Gastrocnemius medialis (tissue), 4 donors: ENCODE measurements at regions of chr3 and their contacts with region 1.

Region 1: GRCh38 chr3:126982471-126983175 is at the start of gene PLXNA1:
- DNase-seq: peak; percentile 18 to 60
- ATAC-seq: peak; percentile 87 to 89
- H3K4me3 ChIP-seq: peak within 1 kb of the TSS; percentile 61 to 75 (median 65)
- H3K27ac ChIP-seq: peak within 1 kb of the TSS; percentile 63 to 72 (median 66)
- H3K4me1 ChIP-seq: peaks cover 3 to 23% of the 10 kb centered on the region in 2 donors
- H3K27me3 ChIP-seq: no peaks in the 10 kb centered on the region
- CTCF ChIP-seq: peak; percentile 74 to 94 (median 87)
- POLR2A ChIP-seq: no peak
- total RNA-seq, gene PLXNA1: 12.7 to 27.9 (median 19.5) TPM

Region 2: DNA sequence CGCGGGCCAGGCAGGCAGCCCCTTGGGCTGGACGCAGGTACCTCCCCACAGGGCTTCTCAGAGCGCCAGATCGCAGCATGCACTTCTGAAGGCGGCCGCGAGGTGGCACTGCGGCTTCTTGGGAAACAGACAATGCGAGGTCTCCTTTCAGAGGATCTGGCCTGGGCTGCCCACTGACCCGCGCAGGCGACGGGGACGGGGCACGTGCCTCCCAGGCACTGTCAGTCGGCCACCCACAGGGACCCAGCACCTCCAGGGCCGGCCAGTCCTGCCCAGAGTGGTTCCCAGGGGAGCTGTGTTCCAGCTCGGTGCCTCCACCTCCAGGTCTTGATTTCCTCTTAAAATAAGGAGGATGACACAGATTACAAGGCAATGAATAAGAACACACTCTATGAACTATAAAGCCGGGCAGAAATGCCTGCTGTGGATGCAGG is 303.3 kb before region 1 on chr3:
- in situ Hi-C with region 1: no loop called
- intact Hi-C with region 1: loop called (anchors 1 kb)
- DNase-seq: peak; percentile 53 to 72
- ATAC-seq: peak; percentile 76 to 92
- H3K4me3 ChIP-seq: no peak overlapping the region
- H3K27ac ChIP-seq: no peak overlapping the region
- H3K4me1 ChIP-seq: no peaks in the 10 kb centered on the region
- H3K27me3 ChIP-seq: no peaks in the 10 kb centered on the region
- CTCF ChIP-seq: peak; percentile 88 to 98 (median 92)
- POLR2A ChIP-seq: no peak

Region 3: DNA sequence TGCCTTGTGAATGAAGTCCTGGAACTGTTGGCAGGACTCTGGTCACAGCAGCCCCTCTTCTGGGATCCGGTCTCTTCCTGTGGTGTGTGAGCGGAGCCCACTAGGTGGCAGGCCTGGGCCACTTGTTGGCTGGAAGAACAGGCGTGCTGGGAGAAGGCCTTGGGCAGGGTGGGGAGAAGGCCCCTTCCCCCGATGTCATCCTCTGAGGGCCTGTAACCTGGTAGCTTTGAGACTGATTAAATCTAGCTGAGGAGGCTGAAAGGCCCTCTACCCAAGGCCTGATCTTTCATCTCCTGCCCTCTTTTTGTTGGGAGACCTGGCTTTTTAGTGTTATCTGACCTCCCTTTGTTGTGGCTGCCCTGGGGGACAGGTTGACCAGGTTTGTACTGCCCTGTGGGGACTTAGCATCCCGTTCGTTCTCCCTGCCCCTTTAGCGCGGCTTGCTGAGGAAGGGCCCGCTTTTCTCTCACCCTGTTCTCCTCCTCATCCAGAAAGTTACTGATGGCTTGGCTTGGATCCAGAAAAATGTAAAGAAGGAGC is 230.2 kb before region 1 on chr3:
- in situ Hi-C with region 1: loop called in 3 of 4 experiments (anchors 5 to 10 kb)
- intact Hi-C with region 1: loop called (anchors 1 kb)
- DNase-seq: peak; percentile 46 to 66
- ATAC-seq: peak; percentile 75 to 82
- H3K4me3 ChIP-seq: no peak overlapping the region
- H3K27ac ChIP-seq: no peak overlapping the region
- H3K4me1 ChIP-seq: no peaks in the 10 kb centered on the region
- H3K27me3 ChIP-seq: no peaks in the 10 kb centered on the region
- CTCF ChIP-seq: peak; percentile 77 to 89 (median 84)
- POLR2A ChIP-seq: no peak

Region 4: DNA sequence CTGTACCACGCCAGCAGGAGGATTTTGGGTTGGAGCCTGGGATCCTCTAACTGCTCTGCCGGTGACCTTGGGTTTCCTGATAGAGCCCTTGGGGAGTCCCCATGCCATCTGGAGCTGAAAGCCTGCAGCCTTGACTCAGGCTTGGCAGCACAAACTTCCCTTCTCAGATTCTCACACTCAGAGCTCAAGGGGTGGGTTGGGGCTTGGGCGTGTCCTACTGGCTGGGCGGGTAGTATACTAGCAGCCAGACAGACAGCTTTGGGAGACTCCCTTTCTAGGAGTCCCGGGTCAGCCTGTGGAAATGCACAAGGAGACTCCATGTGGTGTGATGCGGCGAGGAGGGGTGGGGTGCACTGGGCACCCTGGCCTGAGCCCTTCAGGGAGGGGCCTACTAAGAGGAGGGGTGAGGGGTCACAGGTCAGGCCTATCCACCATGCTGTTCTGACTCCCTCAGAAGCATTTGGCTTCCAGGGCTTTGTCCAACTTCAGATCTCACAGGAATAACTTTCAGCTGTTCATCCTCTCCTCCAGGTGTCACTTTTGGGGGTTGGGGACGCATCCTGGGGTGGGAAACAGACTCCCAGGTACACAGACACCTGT is 21.3 kb before region 1 on chr3:
- in situ Hi-C with region 1: no loop called
- intact Hi-C with region 1: loop called (anchors 2 kb)
- DNase-seq: peak; percentile 73 to 95
- ATAC-seq: peak; percentile 86 to 87
- H3K4me3 ChIP-seq: no peak overlapping the region
- H3K27ac ChIP-seq: peak overlapping the region; percentile 79 to 88 (median 82)
- H3K4me1 ChIP-seq: peaks cover 50 to 55% of the 10 kb centered on the region in 2 donors
- H3K27me3 ChIP-seq: no peaks in the 10 kb centered on the region
- CTCF ChIP-seq: no peak
- POLR2A ChIP-seq: no peak

Region 5: DNA sequence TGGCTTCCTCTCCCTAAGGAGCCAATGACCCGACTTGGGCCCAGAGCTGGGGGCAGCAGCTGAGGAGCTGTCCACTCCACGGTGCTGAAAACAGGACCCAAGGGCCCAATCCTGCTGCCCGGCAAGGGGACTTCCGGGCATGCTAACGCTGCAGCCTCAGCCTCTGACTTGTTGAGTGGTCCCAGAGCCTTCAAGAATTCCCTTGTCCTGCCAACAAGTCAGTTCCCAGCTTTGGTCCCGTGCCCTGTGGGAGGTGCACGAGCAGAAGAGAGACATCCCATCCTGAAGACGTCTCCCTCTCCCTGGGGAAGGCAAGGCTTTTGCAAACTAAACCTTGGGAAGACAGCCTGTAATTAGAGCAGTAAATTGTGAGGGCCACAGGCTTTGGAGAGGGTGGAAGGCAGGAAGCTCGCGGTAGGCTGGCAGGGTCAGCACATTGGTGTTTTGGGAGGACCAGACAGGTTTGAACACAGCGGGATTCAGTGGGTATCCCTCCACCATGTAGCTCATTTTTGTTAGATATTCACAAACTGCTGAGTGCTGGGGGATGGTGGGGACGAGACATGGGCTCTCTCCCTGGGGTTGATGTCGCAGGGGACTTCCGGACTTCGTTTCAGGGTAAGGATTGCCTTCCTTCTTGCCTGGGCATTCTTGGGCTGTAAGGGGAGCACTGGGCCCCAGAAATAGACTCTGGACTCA is 180.5 kb after region 1 on chr3:
- in situ Hi-C with region 1: no loop called
- intact Hi-C with region 1: loop called (anchors 10 kb)
- DNase-seq: no peak
- ATAC-seq: no peak
- H3K4me3 ChIP-seq: no peak overlapping the region
- H3K27ac ChIP-seq: no peak overlapping the region
- H3K4me1 ChIP-seq: peaks cover 0 to 2% of the 10 kb centered on the region in 2 donors
- H3K27me3 ChIP-seq: no peaks in the 10 kb centered on the region
- CTCF ChIP-seq: no peak
- POLR2A ChIP-seq: no peak

Region 6: DNA sequence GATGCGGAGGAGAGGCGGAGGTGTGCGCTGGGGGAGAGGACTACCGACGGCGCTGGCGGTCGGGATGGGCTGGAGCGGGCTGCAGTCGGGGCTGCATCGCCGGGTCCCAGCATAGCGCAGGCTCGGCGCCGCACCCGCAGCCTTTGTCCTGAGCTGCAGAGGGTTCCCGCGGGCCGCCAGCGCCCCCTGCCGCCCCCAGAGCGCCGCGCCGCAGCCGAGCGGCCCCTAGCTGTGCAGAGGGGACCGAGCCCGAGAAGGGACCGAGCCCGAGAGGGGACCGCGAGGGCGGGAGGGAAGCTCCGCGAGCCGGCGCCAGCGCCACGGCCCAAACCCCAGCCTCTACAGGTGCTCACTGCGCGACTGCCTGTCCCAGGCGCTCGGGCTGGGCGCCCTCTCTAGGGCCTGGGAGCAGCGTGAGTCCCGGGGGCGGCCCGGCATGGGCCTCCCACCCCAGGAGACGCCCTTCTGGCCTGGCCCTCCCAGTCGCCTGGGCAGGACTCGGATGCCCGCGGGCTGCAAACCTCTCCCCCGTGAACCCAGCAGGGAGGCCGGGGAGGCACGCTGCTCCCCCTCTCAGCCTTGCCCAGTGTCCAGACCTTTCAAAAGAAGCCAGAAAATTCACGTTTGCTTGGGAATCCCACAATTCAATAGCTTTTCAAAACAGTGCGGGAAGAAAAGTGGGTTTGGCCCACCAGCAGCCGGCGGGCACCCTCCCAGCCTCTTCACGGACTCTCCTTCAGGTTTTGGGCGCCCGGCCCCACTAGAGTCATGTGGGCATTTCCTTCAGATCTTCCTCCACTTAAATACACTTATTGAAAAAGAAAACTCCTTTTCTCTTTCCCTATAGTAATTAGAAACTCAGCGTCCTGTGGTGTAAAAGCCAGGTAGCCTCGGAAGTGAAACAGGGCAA is 473.2 kb after region 1 on chr3:
- in situ Hi-C with region 1: no loop called
- intact Hi-C with region 1: loop called (anchors 10 kb)
- DNase-seq: peak in 1 of 2 donors; percentile 30
- ATAC-seq: peak; percentile 72 to 77
- H3K4me3 ChIP-seq: peak overlapping the region in 2 of 4 donors; percentile 28 to 36
- H3K27ac ChIP-seq: no peak overlapping the region
- H3K4me1 ChIP-seq: peaks cover 4 to 6% of the 10 kb centered on the region in 2 donors
- H3K27me3 ChIP-seq: peaks cover 32 to 44% (median 42%) of the 10 kb centered on the region in 3 donors
- CTCF ChIP-seq: peak; percentile 57 to 83 (median 73)
- POLR2A ChIP-seq: no peak

Region 7: DNA sequence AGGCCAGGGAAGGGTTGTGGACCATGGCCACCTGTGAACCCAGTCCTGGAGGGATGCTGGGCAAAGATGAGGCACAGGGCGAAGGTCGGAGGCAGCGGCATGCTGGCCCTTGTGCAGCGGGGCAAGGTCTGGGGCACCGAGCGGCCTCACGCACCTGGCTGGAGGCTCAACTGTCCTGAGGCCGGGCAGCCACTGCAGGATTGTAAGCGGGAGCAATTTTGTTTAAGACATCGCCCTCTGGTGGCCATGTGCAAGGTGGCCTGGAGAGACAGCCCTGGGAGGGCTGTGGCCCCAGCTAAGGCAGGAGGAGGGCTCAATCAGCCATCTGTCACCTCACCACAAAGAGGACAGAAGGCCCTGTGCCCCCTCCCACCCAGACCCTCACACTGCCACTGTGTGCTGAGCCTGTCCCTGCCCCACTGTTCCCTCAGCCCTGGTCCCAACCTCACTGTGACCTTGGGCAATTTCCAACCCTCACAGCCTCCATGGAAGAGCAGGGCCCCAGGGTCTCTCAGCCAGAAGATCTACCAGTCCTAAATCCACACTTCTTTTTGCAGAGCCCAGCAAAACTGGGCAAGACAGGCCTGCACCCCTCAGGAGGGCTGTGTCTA is 561.7 kb after region 1 on chr3:
- in situ Hi-C with region 1: no loop called
- intact Hi-C with region 1: loop called (anchors 10 kb)
- DNase-seq: peak; percentile 29 to 60
- ATAC-seq: peak; percentile 45 to 55
- H3K4me3 ChIP-seq: no peak overlapping the region
- H3K27ac ChIP-seq: no peak overlapping the region
- H3K4me1 ChIP-seq: peaks cover 7 to 9% of the 10 kb centered on the region in 2 donors
- H3K27me3 ChIP-seq: no peaks in the 10 kb centered on the region
- CTCF ChIP-seq: peak in 4 of 5 experiments; percentile 62 to 80 (median 74)
- POLR2A ChIP-seq: no peak